ENCODE measurements at regions of chr17 and their contacts with region 1.

Region 1: GRCh38 chr17:44385287-44386181 is 3.9 kb downstream of the ITGA2B start:
- DNase-seq: peak; percentile 79
- H3K4me3 Mint-ChIP-seq: peak overlapping the region; percentile 73
- H3K27ac Mint-ChIP-seq: no peak overlapping the region
- H3K4me1 Mint-ChIP-seq: peaks cover 6% of the 10 kb centered on the region
- H3K27me3 Mint-ChIP-seq: peaks cover 24% of the 10 kb centered on the region

Region 2: GRCh38 chr17:44363613-44364159 is 21.8 kb before region 1 on chr17 and contains the start of gene FAM171A2:
- intact Hi-C with region 1: loop called (anchors 1 kb)
- DNase-seq: peak; percentile 59
- H3K4me3 Mint-ChIP-seq: peak within 1 kb of the TSS; percentile 78
- H3K27ac Mint-ChIP-seq: no peak within 1 kb of the TSS
- H3K4me1 Mint-ChIP-seq: no peaks in the 10 kb centered on the region
- H3K27me3 Mint-ChIP-seq: peaks cover 47% of the 10 kb centered on the region
- total RNA-seq, gene FAM171A2: 0.10 and 0.29 TPM in 2 replicates

Region 3: GRCh38 chr17:44503147-44504029 is 117.9 kb after region 1 on chr17 and contains the start of gene GPATCH8:
- intact Hi-C with region 1: loop called (anchors 1 kb)
- DNase-seq: peak; percentile 97
- H3K4me3 Mint-ChIP-seq: peak within 1 kb of the TSS; percentile 98
- H3K27ac Mint-ChIP-seq: peak within 1 kb of the TSS; percentile 95
- H3K4me1 Mint-ChIP-seq: peaks cover 30% of the 10 kb centered on the region
- H3K27me3 Mint-ChIP-seq: no peaks in the 10 kb centered on the region
- total RNA-seq, gene GPATCH8: 50.4 and 51.1 TPM in 2 replicates

Region 4: GRCh38 chr17:44614862-44615261 is 229.3 kb after region 1 on chr17:
- intact Hi-C with region 1: no loop called
- DNase-seq: no peak
- H3K4me3 Mint-ChIP-seq: no peak overlapping the region
- H3K27ac Mint-ChIP-seq: no peak overlapping the region
- H3K4me1 Mint-ChIP-seq: no peaks in the 10 kb centered on the region
- H3K27me3 Mint-ChIP-seq: peaks cover 7% of the 10 kb centered on the region

Measured in activated T-helper 1 cell treated with anti-CD3 and anti-CD28 coated beads, Interleukin-12 subunit alpha, Interleukin-12 subunit beta, Interleukin-2, Interleukin-4 antibody, amounts not matched to agents 30 ng/mL and 10 ng/mL and 1 ng/mL, durations not matched to agents 14 hours and 24 hours and 36 hours (primary cell).